ENCODE measurements at regions of chr14 and their contacts with region 1.

Region 1: GRCh38 chr14:49767562-49768300 is at the start of gene KLHDC2:
- DNase-seq: no peak
- ATAC-seq: peak; percentile 91
- H3K4me3 ChIP-seq: peak within 1 kb of the TSS; percentile 81 to 84
- H3K27ac ChIP-seq: peak within 1 kb of the TSS; percentile 91
- H3K4me1 ChIP-seq: peaks cover 22% of the 10 kb centered on the region
- H3K27me3 ChIP-seq: no peaks in the 10 kb centered on the region
- CTCF ChIP-seq: peak; percentile 84
- total RNA-seq, gene KLHDC2: 24.5 TPM

Region 2: GRCh38 chr14:49633640-49634546 is 133.8 kb before region 1 on chr14:
- CTCF ChIA-PET with region 1: interaction called, 3 read pairs
- POLR2A ChIA-PET with region 1: interaction called, 13 read pairs
- in situ Hi-C with region 1: no loop called
- intact Hi-C with region 1: loop called (anchors 5 kb)
- DNase-seq: peak; percentile 61
- ATAC-seq: peak; percentile 93
- H3K4me3 ChIP-seq: peak overlapping the region; percentile 75 to 92
- H3K27ac ChIP-seq: peak overlapping the region; percentile 96
- H3K4me1 ChIP-seq: no peaks in the 10 kb centered on the region
- H3K27me3 ChIP-seq: no peaks in the 10 kb centered on the region
- CTCF ChIP-seq: peak; percentile 89

Region 3: GRCh38 chr14:49692811-49693734 is 74.7 kb before region 1 on chr14 and contains the start of gene KLHDC1:
- CTCF ChIA-PET with region 1: interaction called, 9 read pairs
- POLR2A ChIA-PET with region 1: interaction called, 6 read pairs
- in situ Hi-C with region 1: no loop called
- intact Hi-C with region 1: loop called (anchors 5 kb)
- DNase-seq: no peak
- ATAC-seq: peak; percentile 79
- H3K4me3 ChIP-seq: peak within 1 kb of the TSS; percentile 60 to 72
- H3K27ac ChIP-seq: peak within 1 kb of the TSS; percentile 93
- H3K4me1 ChIP-seq: peaks cover 12% of the 10 kb centered on the region
- H3K27me3 ChIP-seq: no peaks in the 10 kb centered on the region
- CTCF ChIP-seq: no peak
- total RNA-seq, gene KLHDC1: 1.3 TPM

Region 4: GRCh38 chr14:49733836-49734235 is 33.9 kb before region 1 on chr14:
- CTCF ChIA-PET with region 1: no interaction called
- POLR2A ChIA-PET with region 1: no interaction called
- in situ Hi-C with region 1: no loop called
- intact Hi-C with region 1: no loop called
- DNase-seq: no peak
- ATAC-seq: no peak
- H3K4me3 ChIP-seq: no peak overlapping the region
- H3K27ac ChIP-seq: no peak overlapping the region
- H3K4me1 ChIP-seq: no peaks in the 10 kb centered on the region
- H3K27me3 ChIP-seq: no peaks in the 10 kb centered on the region
- CTCF ChIP-seq: no peak

Region 5: GRCh38 chr14:49808780-49809179 is 41.0 kb after region 1 on chr14:
- CTCF ChIA-PET with region 1: no interaction called
- POLR2A ChIA-PET with region 1: interaction called, 13 read pairs
- in situ Hi-C with region 1: no loop called
- intact Hi-C with region 1: no loop called
- DNase-seq: no peak
- ATAC-seq: no peak
- H3K4me3 ChIP-seq: no peak overlapping the region
- H3K27ac ChIP-seq: no peak overlapping the region
- H3K4me1 ChIP-seq: no peaks in the 10 kb centered on the region
- H3K27me3 ChIP-seq: no peaks in the 10 kb centered on the region
- CTCF ChIP-seq: no peak

Region 6: GRCh38 chr14:50116181-50116956 is 348.6 kb after region 1 on chr14 and contains the start of gene VCPKMT:
- CTCF ChIA-PET with region 1: no interaction called
- POLR2A ChIA-PET with region 1: interaction called, 18 read pairs
- in situ Hi-C with region 1: no loop called
- intact Hi-C with region 1: no loop called
- DNase-seq: peak; percentile 46
- ATAC-seq: peak; percentile 100
- H3K4me3 ChIP-seq: peak within 1 kb of the TSS; percentile 79 to 80
- H3K27ac ChIP-seq: peak within 1 kb of the TSS; percentile 97
- H3K4me1 ChIP-seq: peaks cover 8% of the 10 kb centered on the region
- H3K27me3 ChIP-seq: no peaks in the 10 kb centered on the region
- CTCF ChIP-seq: no peak
- total RNA-seq, gene VCPKMT: 6.1 TPM